Mammary epithelial cell (primary cell): ENCODE measurements at regions of chr6 and their contacts with region 1.

Region 1: GRCh38 chr6:34414999-34415858 is 10.6 kb downstream of the RPS10 start:
- DNase-seq: peak; percentile 50
- H3K4me3 ChIP-seq: no peak overlapping the region
- H3K27ac ChIP-seq: no peak overlapping the region
- H3K4me1 ChIP-seq: peaks cover 4% of the 10 kb centered on the region
- H3K27me3 ChIP-seq: no peaks in the 10 kb centered on the region
- CTCF ChIP-seq: peak; percentile 51 to 60

Region 2: GRCh38 chr6:33949877-33950435 is 465.3 kb before region 1 on chr6:
- CTCF ChIA-PET with region 1: interaction called, 13 read pairs
- dilution Hi-C with region 1: no loop called
- in situ Hi-C with region 1: no loop called
- intact Hi-C with region 1: no loop called
- DNase-seq: no peak
- H3K4me3 ChIP-seq: no peak overlapping the region
- H3K27ac ChIP-seq: no peak overlapping the region
- H3K4me1 ChIP-seq: no peaks in the 10 kb centered on the region
- H3K27me3 ChIP-seq: no peaks in the 10 kb centered on the region
- CTCF ChIP-seq: no peak

Region 3: GRCh38 chr6:34202329-34203201 is 212.7 kb before region 1 on chr6:
- CTCF ChIA-PET with region 1: no interaction called
- dilution Hi-C with region 1: no loop called
- in situ Hi-C with region 1: loop called (anchors 10 kb)
- intact Hi-C with region 1: no loop called
- DNase-seq: no peak
- H3K4me3 ChIP-seq: no peak overlapping the region
- H3K27ac ChIP-seq: no peak overlapping the region
- H3K4me1 ChIP-seq: peaks cover 4% of the 10 kb centered on the region
- H3K27me3 ChIP-seq: no peaks in the 10 kb centered on the region
- CTCF ChIP-seq: no peak

Region 4: GRCh38 chr6:34267746-34268145 is 147.5 kb before region 1 on chr6:
- CTCF ChIA-PET with region 1: interaction called, 14 read pairs
- dilution Hi-C with region 1: no loop called
- in situ Hi-C with region 1: no loop called
- intact Hi-C with region 1: no loop called
- DNase-seq: no peak
- H3K4me3 ChIP-seq: no peak overlapping the region
- H3K27ac ChIP-seq: no peak overlapping the region
- H3K4me1 ChIP-seq: no peaks in the 10 kb centered on the region
- H3K27me3 ChIP-seq: no peaks in the 10 kb centered on the region
- CTCF ChIP-seq: no peak

Region 5: DNA sequence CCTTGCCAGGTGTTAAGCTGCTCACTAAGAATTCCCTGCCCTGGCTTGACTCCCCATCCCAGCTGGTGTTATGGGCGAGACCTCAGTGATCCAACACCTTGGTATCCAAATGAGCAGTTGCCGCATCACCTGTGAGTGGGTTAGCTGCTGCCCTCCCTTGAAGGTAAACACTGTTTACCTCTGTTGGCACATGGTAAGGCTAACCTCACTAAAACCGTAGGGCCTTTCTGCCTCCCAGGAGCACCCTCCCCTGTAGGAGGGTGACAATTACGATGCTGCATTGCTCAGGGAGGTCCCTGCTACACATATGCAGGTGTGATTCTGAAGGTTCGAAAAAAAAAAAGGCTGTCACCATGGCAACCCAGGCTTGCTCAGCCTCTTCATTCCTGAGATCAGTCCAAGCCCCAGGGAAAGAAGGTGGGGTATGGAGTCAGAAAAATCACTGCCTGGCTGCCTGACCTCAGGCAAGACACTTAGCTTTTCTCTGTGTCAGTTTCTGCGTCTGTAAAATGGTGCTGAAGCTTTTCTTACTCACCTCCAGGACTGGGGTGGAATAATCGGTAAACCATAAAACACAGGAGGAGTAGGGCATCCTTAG is 1874.2 kb after region 1 on chr6:
- CTCF ChIA-PET with region 1: interaction called, 16 read pairs
- dilution Hi-C with region 1: no loop called
- in situ Hi-C with region 1: no loop called
- intact Hi-C with region 1: no loop called
- DNase-seq: peak; percentile 47
- H3K4me3 ChIP-seq: no peak overlapping the region
- H3K27ac ChIP-seq: no peak overlapping the region
- H3K4me1 ChIP-seq: no peaks in the 10 kb centered on the region
- H3K27me3 ChIP-seq: peaks cover 4% of the 10 kb centered on the region
- CTCF ChIP-seq: no peak